ENCODE measurements at regions of chr9 and their contacts with region 1.

Region 1: DNA sequence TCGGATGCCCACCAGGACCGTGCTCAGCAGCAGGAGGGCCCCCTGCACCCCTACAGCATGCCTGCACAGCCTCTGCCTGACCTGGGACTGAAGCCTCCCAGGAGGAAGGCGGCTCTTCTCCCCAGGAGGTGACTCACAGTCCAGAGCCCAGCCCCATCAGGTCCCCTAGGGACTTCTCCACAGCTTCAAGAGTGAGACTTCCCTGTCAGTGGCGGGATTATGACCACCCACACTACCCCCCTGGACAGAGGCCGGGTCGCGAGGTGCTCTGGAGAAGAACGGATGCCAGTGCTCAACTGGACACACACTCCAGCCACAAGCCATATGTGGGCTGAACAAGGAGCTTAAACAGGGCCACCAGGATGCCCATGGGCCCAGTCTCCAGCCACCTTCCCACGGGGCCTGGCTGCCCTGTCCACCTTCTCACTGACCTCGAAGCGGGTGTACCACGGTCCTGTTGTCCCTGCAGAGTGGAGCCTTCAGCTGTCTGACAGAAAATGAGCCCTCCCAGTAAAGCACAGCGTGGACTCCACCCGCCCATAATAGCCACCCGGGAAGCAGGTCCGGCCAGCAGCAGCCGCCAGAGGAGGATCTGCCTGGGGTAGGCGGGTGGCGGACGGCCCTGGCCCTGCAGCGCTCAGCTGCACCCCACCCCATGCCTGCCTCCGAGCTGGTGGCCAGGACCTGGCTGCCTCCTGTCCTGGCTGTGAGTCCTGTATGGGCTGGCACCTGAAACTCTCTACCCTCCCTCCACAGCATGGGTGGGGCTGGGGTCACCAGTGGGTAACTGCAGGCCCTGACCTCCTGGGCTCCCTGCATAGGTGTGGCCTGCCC is 54.7 kb downstream of the SEMA4D start:
- DNase-seq: no peak
- ATAC-seq: no peak
- H3K4me3 ChIP-seq: peak overlapping the region in 1 of 2 experiments; percentile 10
- H3K4me3 Mint-ChIP-seq: no peak overlapping the region
- H3K27ac ChIP-seq: peak overlapping the region; percentile 46 to 50
- H3K27ac Mint-ChIP-seq: peak overlapping the region; percentile 97
- H3K4me1 ChIP-seq: peaks cover 97% of the 10 kb centered on the region
- H3K4me1 Mint-ChIP-seq: peaks cover 89% of the 10 kb centered on the region
- H3K27me3 ChIP-seq: no peaks in the 10 kb centered on the region
- H3K27me3 Mint-ChIP-seq: no peaks in the 10 kb centered on the region
- CTCF ChIP-seq: no peak

Region 2: GRCh38 chr9:88991066-88992034 is 451.8 kb before region 1 on chr9 and contains the start of gene S1PR3:
- CTCF ChIA-PET with region 1: no interaction called
- POLR2A ChIA-PET with region 1: no interaction called
- intact Hi-C with region 1: no loop called
- DNase-seq: peak in 2 of 9 experiments; percentile 17 to 49
- ATAC-seq: no peak
- H3K4me3 ChIP-seq: peak within 1 kb of the TSS in 1 of 2 experiments; percentile 34
- H3K4me3 Mint-ChIP-seq: peak within 1 kb of the TSS; percentile 61
- H3K27ac ChIP-seq: no peak within 1 kb of the TSS
- H3K27ac Mint-ChIP-seq: no peak within 1 kb of the TSS
- H3K4me1 ChIP-seq: peaks cover 19% of the 10 kb centered on the region
- H3K4me1 Mint-ChIP-seq: peaks cover 21% of the 10 kb centered on the region
- H3K27me3 ChIP-seq: peaks cover 5 to 19% of the 10 kb centered on the region in 2 experiments
- H3K27me3 Mint-ChIP-seq: peaks cover 47% of the 10 kb centered on the region
- CTCF ChIP-seq: no peak
- total RNA-seq, gene S1PR3: 0.08 TPM in 1 of 2 experiments, not detected in the other

Region 3: DNA sequence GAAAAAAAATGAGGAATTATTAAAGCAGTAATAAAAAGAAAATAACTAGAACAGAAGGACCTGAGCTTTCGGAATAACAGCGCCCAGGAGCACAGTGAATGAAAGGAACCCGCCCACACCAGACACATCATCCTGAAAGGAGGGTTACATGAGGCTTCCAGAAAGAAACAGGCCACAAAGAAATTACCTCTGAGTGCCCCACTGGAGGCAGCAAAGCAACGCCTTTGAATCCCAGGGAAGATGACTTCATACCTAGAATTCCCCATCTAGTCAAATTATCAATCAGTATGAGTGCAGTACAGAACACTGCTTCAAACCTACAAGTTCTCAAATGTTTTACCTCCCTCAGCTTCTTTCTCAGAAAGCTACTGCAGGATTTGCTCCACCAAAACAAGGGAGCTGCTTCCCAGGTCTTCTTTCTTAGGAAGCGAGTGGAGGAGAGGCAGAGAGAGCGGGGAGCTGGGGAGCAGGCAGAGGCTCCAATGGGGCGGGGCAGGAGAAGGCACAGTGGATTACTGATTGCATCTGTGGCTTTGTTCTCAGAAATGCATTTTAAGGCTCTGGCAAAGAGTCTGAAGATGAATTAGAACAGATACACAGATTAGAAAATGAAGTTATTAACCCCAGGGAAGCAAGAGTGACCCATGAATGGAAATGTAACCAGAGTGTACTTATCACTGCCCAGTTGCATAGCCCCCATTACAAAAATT is 32.4 kb before region 1 on chr9:
- CTCF ChIA-PET with region 1: interaction called, 3 read pairs
- POLR2A ChIA-PET with region 1: no interaction called
- intact Hi-C with region 1: loop called in 1 of 2 experiments (anchors 5 kb)
- DNase-seq: peak in 3 of 9 experiments; percentile 23 to 72 (median 54)
- ATAC-seq: peak; percentile 30
- H3K4me3 ChIP-seq: no peak overlapping the region
- H3K4me3 Mint-ChIP-seq: peak overlapping the region; percentile 22
- H3K27ac ChIP-seq: peak overlapping the region in 1 of 2 experiments; percentile 29
- H3K27ac Mint-ChIP-seq: peak overlapping the region; percentile 84
- H3K4me1 ChIP-seq: peaks cover 62% of the 10 kb centered on the region
- H3K4me1 Mint-ChIP-seq: peaks cover 85% of the 10 kb centered on the region
- H3K27me3 ChIP-seq: no peaks in the 10 kb centered on the region
- H3K27me3 Mint-ChIP-seq: no peaks in the 10 kb centered on the region
- CTCF ChIP-seq: no peak

Region 4: GRCh38 chr9:90504486-90504885 is 1061.3 kb after region 1 on chr9:
- CTCF ChIA-PET with region 1: no interaction called
- POLR2A ChIA-PET with region 1: no interaction called
- intact Hi-C with region 1: no loop called
- DNase-seq: no peak
- ATAC-seq: no peak
- H3K4me3 ChIP-seq: no peak overlapping the region
- H3K4me3 Mint-ChIP-seq: no peak overlapping the region
- H3K27ac ChIP-seq: no peak overlapping the region
- H3K27ac Mint-ChIP-seq: no peak overlapping the region
- H3K4me1 ChIP-seq: no peaks in the 10 kb centered on the region
- H3K4me1 Mint-ChIP-seq: peaks cover 2% of the 10 kb centered on the region
- H3K27me3 ChIP-seq: no peaks in the 10 kb centered on the region
- H3K27me3 Mint-ChIP-seq: peaks cover 2% of the 10 kb centered on the region
- CTCF ChIP-seq: no peak

Measured in CD8-positive, alpha-beta T cell (primary cell).